ENCODE measurements at regions of chr6 and their contacts with region 1.

Region 1: GRCh38 chr6:27838058-27838944 is 73.9 kb downstream of the OR2B2 start:
- DNase-seq: peak; percentile 98
- ATAC-seq: peak; percentile 80
- H3K4me3 ChIP-seq: peak overlapping the region; percentile 82 to 99 (median 90)
- H3K4me3 Mint-ChIP-seq: no peak overlapping the region
- H3K27ac ChIP-seq: peak overlapping the region; percentile 94 to 96
- H3K27ac Mint-ChIP-seq: no peak overlapping the region
- H3K4me1 ChIP-seq: peaks cover 28 to 29% of the 10 kb centered on the region in 2 donors
- H3K4me1 Mint-ChIP-seq: peaks cover 18% of the 10 kb centered on the region
- H3K27me3 ChIP-seq: peaks cover 0 to 4% (median 0%) of the 10 kb centered on the region in 4 experiments
- H3K27me3 Mint-ChIP-seq: no peaks in the 10 kb centered on the region
- CTCF ChIP-seq: no peak

Region 2: DNA sequence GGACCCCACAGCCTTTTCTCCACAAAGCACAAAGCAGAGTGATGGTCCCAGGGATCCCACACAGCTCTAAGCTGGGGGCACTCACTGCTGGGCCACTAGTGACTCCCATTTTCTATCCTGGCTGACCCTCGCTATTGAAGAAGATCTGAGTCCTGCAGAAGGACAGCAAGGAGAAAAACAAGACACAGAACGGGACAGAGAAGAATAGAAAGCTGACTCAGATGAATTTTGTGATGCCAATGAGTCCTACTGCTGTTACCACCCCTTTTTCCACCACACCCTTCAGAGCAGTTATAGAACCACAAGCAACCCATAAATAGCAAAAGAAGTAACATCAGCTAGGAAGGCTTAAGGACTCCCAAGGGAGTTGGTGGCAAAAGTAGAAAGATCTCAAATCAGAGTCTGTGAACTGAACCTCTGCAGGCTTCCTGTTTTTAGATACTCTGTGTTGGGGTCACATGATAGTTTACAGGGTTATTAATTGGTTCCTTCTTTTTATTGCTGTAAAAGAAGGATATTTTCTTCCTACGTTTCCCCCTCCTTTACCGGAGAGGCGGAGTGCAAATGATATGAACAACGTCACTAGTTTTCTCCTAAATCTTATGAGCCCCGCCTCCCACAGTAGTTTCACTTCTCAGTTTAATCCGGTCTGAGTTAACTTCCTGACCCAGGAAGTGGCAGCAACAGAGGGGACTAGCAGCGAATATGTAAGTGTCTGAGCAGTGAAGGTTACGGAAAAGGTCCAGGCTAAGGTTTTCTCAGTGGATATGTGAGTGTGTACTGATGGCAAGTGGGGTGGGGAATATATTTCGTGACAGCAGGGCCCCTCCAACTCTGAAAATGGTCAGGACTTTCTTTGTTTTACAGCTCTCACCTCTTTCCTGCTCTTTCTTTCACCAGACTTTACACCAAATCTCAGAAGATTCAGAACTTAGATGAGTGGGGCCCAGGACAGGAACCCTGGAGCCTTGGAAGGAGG is 1875.9 kb before region 1 on chr6 and contains the start of gene TRIM38:
- CTCF ChIA-PET with region 1: no interaction called
- POLR2A ChIA-PET with region 1: no interaction called
- intact Hi-C with region 1: loop called (anchors 5 kb)
- DNase-seq: peak; percentile 95
- ATAC-seq: peak; percentile 84
- H3K4me3 ChIP-seq: peak within 1 kb of the TSS; percentile 83 to 95 (median 92)
- H3K4me3 Mint-ChIP-seq: peak within 1 kb of the TSS; percentile 97
- H3K27ac ChIP-seq: peak within 1 kb of the TSS; percentile 94 to 97
- H3K27ac Mint-ChIP-seq: peak within 1 kb of the TSS; percentile 98
- H3K4me1 ChIP-seq: peaks cover 74 to 75% of the 10 kb centered on the region in 2 donors
- H3K4me1 Mint-ChIP-seq: peaks cover 78% of the 10 kb centered on the region
- H3K27me3 ChIP-seq: no peaks in the 10 kb centered on the region
- H3K27me3 Mint-ChIP-seq: no peaks in the 10 kb centered on the region
- CTCF ChIP-seq: no peak
- total RNA-seq, gene TRIM38: 57.2 and 57.5 TPM in 2 replicates

Region 3: DNA sequence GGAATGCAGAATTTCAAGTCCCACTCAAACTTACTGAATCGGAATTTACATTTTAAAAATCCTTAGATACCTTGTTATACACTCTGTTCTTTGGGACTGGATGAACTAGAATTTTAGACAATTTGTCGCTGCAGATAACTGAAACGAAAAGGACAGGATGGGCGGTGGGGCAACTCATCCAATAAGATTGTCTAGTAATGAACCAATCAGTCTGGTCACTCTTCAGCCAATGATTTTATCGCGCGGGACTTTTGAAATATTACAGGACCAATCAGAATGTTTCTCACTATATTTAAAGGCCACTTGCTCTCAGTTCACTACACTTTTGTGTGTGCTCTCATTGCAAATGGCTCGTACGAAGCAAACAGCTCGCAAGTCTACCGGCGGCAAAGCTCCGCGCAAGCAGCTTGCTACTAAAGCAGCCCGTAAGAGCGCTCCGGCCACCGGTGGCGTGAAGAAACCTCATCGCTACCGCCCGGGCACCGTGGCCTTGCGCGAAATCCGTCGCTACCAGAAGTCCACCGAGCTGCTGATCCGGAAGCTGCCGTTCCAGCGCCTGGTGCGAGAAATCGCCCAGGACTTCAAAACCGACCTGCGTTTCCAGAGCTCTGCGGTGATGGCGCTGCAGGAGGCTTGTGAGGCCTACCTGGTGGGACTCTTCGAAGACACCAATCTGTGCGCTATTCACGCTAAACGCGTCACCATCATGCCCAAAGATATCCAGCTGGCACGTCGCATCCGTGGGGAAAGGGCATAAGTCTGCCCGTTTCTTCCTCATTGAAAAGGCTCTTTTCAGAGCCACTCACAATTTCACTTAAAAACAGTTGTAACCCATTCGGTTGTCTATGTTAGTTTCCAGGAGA is 1793.0 kb before region 1 on chr6:
- CTCF ChIA-PET with region 1: no interaction called
- POLR2A ChIA-PET with region 1: interaction called, 14 read pairs
- intact Hi-C with region 1: no loop called
- DNase-seq: peak; percentile 90
- ATAC-seq: peak; percentile 58
- H3K4me3 ChIP-seq: peak overlapping the region; percentile 56 to 98 (median 69)
- H3K4me3 Mint-ChIP-seq: peak overlapping the region; percentile 87
- H3K27ac ChIP-seq: peak overlapping the region; percentile 85 to 89
- H3K27ac Mint-ChIP-seq: peak overlapping the region; percentile 99
- H3K4me1 ChIP-seq: peaks cover 14 to 29% of the 10 kb centered on the region in 2 donors
- H3K4me1 Mint-ChIP-seq: peaks cover 17% of the 10 kb centered on the region
- H3K27me3 ChIP-seq: no peaks in the 10 kb centered on the region
- H3K27me3 Mint-ChIP-seq: no peaks in the 10 kb centered on the region
- CTCF ChIP-seq: no peak

Region 4: GRCh38 chr6:27825025-27825793 is 13.1 kb before region 1 on chr6:
- CTCF ChIA-PET with region 1: interaction called, 12 read pairs
- POLR2A ChIA-PET with region 1: interaction called, 40 read pairs
- intact Hi-C with region 1: loop called (anchors 2 kb)
- DNase-seq: peak; percentile 41
- ATAC-seq: no peak
- H3K4me3 ChIP-seq: peak overlapping the region; percentile 66 to 95 (median 88)
- H3K4me3 Mint-ChIP-seq: peak overlapping the region; percentile 95
- H3K27ac ChIP-seq: peak overlapping the region; percentile 79 to 90
- H3K27ac Mint-ChIP-seq: peak overlapping the region; percentile 97
- H3K4me1 ChIP-seq: peaks cover 16 to 20% of the 10 kb centered on the region in 2 donors
- H3K4me1 Mint-ChIP-seq: peaks cover 35% of the 10 kb centered on the region
- H3K27me3 ChIP-seq: no peaks in the 10 kb centered on the region
- H3K27me3 Mint-ChIP-seq: no peaks in the 10 kb centered on the region
- CTCF ChIP-seq: no peak

Region 5: GRCh38 chr6:27864906-27865849 is 26.9 kb after region 1 on chr6:
- CTCF ChIA-PET with region 1: interaction called, 43 read pairs
- POLR2A ChIA-PET with region 1: interaction called, 166 read pairs
- intact Hi-C with region 1: loop called (anchors 1 kb)
- DNase-seq: peak; percentile 97
- ATAC-seq: peak; percentile 80
- H3K4me3 ChIP-seq: peak overlapping the region; percentile 60 to 82 (median 69)
- H3K4me3 Mint-ChIP-seq: peak overlapping the region; percentile 97
- H3K27ac ChIP-seq: peak overlapping the region; percentile 81 to 83
- H3K27ac Mint-ChIP-seq: peak overlapping the region; percentile 97
- H3K4me1 ChIP-seq: peaks cover 13 to 35% of the 10 kb centered on the region in 2 donors
- H3K4me1 Mint-ChIP-seq: peaks cover 45% of the 10 kb centered on the region
- H3K27me3 ChIP-seq: no peaks in the 10 kb centered on the region
- H3K27me3 Mint-ChIP-seq: no peaks in the 10 kb centered on the region
- CTCF ChIP-seq: no peak

Region 6: GRCh38 chr6:27871924-27872638 is 33.8 kb after region 1 on chr6:
- CTCF ChIA-PET with region 1: interaction called, 43 read pairs
- POLR2A ChIA-PET with region 1: interaction called, 166 read pairs
- intact Hi-C with region 1: loop called (anchors 1 kb)
- DNase-seq: peak; percentile 98
- ATAC-seq: peak; percentile 76
- H3K4me3 ChIP-seq: peak overlapping the region; percentile 66 to 99 (median 76)
- H3K4me3 Mint-ChIP-seq: peak overlapping the region; percentile 84
- H3K27ac ChIP-seq: peak overlapping the region; percentile 79 to 88
- H3K27ac Mint-ChIP-seq: peak overlapping the region; percentile 98
- H3K4me1 ChIP-seq: peaks cover 20 to 34% of the 10 kb centered on the region in 2 donors
- H3K4me1 Mint-ChIP-seq: peaks cover 30% of the 10 kb centered on the region
- H3K27me3 ChIP-seq: no peaks in the 10 kb centered on the region
- H3K27me3 Mint-ChIP-seq: no peaks in the 10 kb centered on the region
- CTCF ChIP-seq: peak; percentile 56

Measured in B cell (primary cell).